Activated B cell treated with CpG ODN at 0.5 μM for 24 hours (primary cell): ENCODE measurements at regions of chr22 and their contacts with region 1.

Region 1: DNA sequence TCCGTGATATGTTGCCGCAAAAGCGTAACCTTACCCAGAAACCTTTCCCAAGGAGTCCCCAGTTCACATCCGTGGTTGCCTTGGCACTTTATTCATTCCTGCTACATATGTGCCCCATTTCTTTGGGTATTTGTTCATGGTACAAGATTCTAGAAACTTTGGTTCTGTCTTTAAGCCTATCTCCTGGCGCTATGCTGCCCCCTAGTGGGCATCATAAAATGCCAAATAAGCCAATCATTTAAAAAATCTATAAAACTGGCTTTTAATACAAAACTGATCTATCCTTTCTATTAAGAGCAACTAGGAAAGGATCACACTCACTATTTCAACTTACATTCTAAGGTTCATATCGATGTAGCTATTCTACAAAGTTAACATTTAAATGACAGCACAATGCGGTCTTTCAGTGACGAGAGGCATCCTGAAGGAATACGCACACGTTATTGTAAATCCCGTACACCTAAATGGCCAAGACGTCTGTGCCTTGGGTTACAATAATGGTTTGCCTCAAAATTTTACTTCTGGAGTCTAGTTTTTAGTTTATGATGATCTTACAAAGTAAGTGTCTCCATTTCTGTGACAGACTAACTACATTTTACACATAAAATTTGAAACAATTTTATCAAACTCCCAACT is 16.2 kb downstream of the PIWIL3 start:
- DNase-seq: no peak
- ATAC-seq: no peak
- H3K4me3 Mint-ChIP-seq: no peak overlapping the region
- H3K27ac Mint-ChIP-seq: no peak overlapping the region
- H3K4me1 Mint-ChIP-seq: no peaks in the 10 kb centered on the region
- H3K27me3 Mint-ChIP-seq: peaks cover 10% of the 10 kb centered on the region
- CTCF ChIP-seq: peak; percentile 92

Region 2: DNA sequence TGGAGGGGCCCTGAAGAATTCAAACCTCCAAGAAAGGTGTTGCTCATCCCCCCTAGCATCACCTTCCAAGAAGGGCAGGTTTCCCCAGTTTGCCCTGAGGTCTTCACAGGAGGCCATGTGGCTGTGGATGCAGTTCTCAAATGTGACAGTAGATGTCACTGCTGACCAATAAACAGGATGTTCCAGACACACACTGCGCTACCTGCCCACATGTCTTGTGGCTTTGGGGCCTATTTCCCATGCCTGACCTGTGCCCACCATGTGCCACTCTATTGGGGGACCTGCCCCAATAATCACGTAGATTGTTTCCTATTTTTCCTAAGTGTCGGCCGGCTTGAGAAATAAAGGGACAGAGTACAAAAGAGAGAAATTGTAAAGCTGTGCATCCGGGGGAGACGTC is 773.9 kb before region 1 on chr22:
- CTCF ChIA-PET with region 1: no interaction called
- POLR2A ChIA-PET with region 1: no interaction called
- intact Hi-C with region 1: loop called (anchors 5 kb)
- DNase-seq: no peak
- ATAC-seq: peak; percentile 91
- H3K4me3 Mint-ChIP-seq: no peak overlapping the region
- H3K27ac Mint-ChIP-seq: no peak overlapping the region
- H3K4me1 Mint-ChIP-seq: no peaks in the 10 kb centered on the region
- H3K27me3 Mint-ChIP-seq: no peaks in the 10 kb centered on the region
- CTCF ChIP-seq: no peak